Naive thymus-derived CD4-positive, alpha-beta T cell (primary cell): ENCODE measurements at regions of chr4 and their contacts with region 1.

Region 1: GRCh38 chr4:176789955-176790354 is 2.8 kb downstream of the VEGFC start:
- DNase-seq: no peak
- ATAC-seq: no peak
- H3K4me3 ChIP-seq: no peak overlapping the region
- H3K4me3 Mint-ChIP-seq: no peak overlapping the region
- H3K27ac ChIP-seq: no peak overlapping the region
- H3K27ac Mint-ChIP-seq: no peak overlapping the region
- H3K4me1 ChIP-seq: no peaks in the 10 kb centered on the region
- H3K4me1 Mint-ChIP-seq: peaks cover 0 to 20% (median 10%) of the 10 kb centered on the region in 7 donors
- H3K27me3 ChIP-seq: peaks cover 0 to 5% of the 10 kb centered on the region in 2 donors
- H3K27me3 Mint-ChIP-seq: peaks cover 43 to 57% (median 48%) of the 10 kb centered on the region in 5 donors

Region 2: DNA sequence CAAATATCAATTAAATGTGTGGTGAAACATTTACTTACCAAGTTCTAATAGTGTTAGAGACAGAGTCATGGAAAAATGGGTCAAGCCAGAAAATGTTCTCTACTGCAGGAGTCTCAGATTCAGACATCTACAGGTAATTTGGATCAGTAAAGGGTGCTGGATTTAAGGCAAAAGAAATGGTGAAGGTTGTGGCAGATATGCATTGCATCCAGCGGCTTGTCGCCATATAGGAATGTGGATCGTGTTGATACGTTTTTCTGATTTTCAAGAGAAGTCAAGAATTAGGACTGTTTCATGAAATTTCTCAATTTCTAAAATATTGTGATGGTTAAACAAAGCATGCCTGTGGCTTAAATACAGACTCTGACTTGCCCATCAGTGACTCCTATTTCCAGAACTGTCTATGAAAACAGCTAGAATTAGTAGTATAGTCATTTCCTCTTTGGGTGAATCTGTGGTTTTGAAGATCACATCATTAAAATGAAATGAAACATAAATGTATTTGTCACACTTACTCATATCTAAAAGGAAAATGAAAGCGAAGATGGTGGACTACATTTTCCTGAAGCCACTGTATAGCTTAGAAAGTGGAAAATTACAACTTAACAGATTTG is 112.9 kb after region 1 on chr4:
- CTCF ChIA-PET with region 1: no interaction called
- POLR2A ChIA-PET with region 1: no interaction called
- intact Hi-C with region 1: loop called in 1 of 2 experiments (anchors 1 kb)
- DNase-seq: no peak
- ATAC-seq: no peak
- H3K4me3 ChIP-seq: no peak overlapping the region
- H3K4me3 Mint-ChIP-seq: peak overlapping the region in 1 of 10 donors; percentile 45
- H3K27ac ChIP-seq: no peak overlapping the region
- H3K27ac Mint-ChIP-seq: peak overlapping the region in 1 of 9 donors; percentile 31
- H3K4me1 ChIP-seq: no peaks in the 10 kb centered on the region
- H3K4me1 Mint-ChIP-seq: peaks cover 0 to 17% (median 0%) of the 10 kb centered on the region in 7 donors
- H3K27me3 ChIP-seq: no peaks in the 10 kb centered on the region
- H3K27me3 Mint-ChIP-seq: peaks cover 0 to 6% (median 0%) of the 10 kb centered on the region in 5 donors